Heart right ventricle (tissue), 16 donors: ENCODE measurements at regions of chr13 and their contacts with region 1.

Region 1: GRCh38 chr13:95684418-95684817 is 7.5 kb downstream of the DNAJC3 start:
- DNase-seq: no peak
- ATAC-seq: peak in 1 of 8 donors; percentile 41
- H3K4me3 ChIP-seq: no peak overlapping the region
- H3K27ac ChIP-seq: no peak overlapping the region
- H3K4me1 ChIP-seq: peaks cover 0 to 77% (median 34%) of the 10 kb centered on the region in 9 donors
- H3K27me3 ChIP-seq: no peaks in the 10 kb centered on the region
- CTCF ChIP-seq: no peak

Region 2: DNA sequence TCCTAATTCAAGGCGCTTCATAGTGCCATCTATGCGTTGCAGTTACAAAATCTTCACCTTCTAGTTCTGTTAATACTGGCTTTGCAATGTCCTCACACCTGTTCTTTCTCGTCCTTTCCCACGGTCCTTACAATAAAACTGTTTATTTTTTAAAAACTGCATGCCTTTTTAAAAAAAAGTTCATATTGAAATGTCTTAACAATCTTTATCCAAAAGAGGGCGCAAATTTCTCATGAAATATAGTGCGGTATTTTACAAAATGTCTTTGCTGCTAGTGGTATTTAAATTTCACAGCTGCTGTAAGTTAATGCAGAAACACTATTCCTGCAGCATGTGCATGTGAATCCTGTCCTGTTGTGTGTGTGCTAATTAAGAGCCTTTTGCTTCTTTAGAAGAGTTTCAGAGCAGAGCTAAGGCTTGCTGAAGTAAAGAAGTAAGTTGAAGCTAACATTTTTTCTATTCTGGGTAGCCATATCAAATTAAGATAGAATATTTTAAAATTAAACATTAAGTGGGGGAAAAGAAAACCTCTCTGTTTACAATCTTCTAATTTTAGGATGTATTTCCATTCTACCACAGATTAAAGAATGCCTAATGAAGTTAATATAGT is 147.7 kb before region 1 on chr13:
- intact Hi-C with region 1: no loop called
- DNase-seq: no peak
- ATAC-seq: no peak
- H3K4me3 ChIP-seq: no peak overlapping the region
- H3K27ac ChIP-seq: no peak overlapping the region
- H3K4me1 ChIP-seq: peaks cover 0 to 18% (median 11%) of the 10 kb centered on the region in 9 donors
- H3K27me3 ChIP-seq: peaks cover 0 to 3% (median 0%) of the 10 kb centered on the region in 7 donors
- CTCF ChIP-seq: peak in 8 of 9 donors; percentile 17 to 62 (median 50)

Region 3: DNA sequence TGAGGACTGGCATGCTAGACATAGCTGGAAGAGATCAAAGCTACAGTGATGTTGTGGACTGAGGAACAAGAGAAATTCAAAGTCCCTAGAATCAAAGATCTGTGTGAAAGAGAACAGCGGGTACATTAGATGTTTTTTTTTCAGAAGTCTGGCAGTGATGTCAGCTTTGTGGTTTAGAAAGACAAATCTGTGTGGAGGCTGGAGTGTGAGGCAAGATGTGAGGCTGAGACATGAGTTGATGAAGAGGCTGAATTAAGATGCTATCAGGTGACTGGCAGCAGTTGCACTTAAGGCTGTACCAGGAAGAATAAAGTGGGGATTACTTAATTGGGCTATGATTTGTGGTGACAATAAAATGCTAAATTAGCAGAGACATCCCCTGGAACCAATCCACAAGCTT is 39.0 kb after region 1 on chr13:
- intact Hi-C with region 1: loop called in 1 of 10 experiments (anchors 2 kb)
- DNase-seq: no peak
- ATAC-seq: no peak
- H3K4me3 ChIP-seq: no peak overlapping the region
- H3K27ac ChIP-seq: no peak overlapping the region
- H3K4me1 ChIP-seq: peaks cover 0 to 4% (median 0%) of the 10 kb centered on the region in 9 donors
- H3K27me3 ChIP-seq: no peaks in the 10 kb centered on the region
- CTCF ChIP-seq: no peak

Region 4: DNA sequence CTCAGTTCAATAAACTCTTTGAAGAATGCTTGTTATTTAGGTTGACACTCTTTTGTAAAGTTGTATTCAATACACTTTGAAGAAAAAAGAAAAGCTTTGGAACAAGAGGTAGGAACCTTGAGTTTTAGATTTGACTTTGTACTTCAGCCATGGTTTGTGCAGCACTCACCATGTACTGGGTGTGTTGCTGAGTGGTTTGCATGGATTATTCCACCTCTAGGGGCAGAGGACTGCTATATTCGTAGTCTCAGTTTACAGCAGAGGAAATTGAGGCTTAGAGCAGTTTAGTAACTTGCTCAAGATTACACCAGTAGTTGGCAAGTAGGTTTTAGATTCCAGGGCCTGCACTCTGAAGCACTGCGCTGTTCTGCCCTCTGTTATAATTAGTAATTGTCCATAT is 61.3 kb after region 1 on chr13:
- intact Hi-C with region 1: loop called in 1 of 10 experiments (anchors 10 kb)
- DNase-seq: no peak
- ATAC-seq: peak in 4 of 8 donors; percentile 28 to 49 (median 34)
- H3K4me3 ChIP-seq: no peak overlapping the region
- H3K27ac ChIP-seq: no peak overlapping the region
- H3K4me1 ChIP-seq: peaks cover 0 to 16% (median 4%) of the 10 kb centered on the region in 9 donors
- H3K27me3 ChIP-seq: no peaks in the 10 kb centered on the region
- CTCF ChIP-seq: no peak

Region 5: GRCh38 chr13:95771905-95772304 is 87.5 kb after region 1 on chr13:
- intact Hi-C with region 1: loop called in 1 of 10 experiments (anchors 10 kb)
- DNase-seq: no peak
- ATAC-seq: no peak
- H3K4me3 ChIP-seq: no peak overlapping the region
- H3K27ac ChIP-seq: no peak overlapping the region
- H3K4me1 ChIP-seq: no peaks in the 10 kb centered on the region
- H3K27me3 ChIP-seq: no peaks in the 10 kb centered on the region
- CTCF ChIP-seq: no peak

Region 6: DNA sequence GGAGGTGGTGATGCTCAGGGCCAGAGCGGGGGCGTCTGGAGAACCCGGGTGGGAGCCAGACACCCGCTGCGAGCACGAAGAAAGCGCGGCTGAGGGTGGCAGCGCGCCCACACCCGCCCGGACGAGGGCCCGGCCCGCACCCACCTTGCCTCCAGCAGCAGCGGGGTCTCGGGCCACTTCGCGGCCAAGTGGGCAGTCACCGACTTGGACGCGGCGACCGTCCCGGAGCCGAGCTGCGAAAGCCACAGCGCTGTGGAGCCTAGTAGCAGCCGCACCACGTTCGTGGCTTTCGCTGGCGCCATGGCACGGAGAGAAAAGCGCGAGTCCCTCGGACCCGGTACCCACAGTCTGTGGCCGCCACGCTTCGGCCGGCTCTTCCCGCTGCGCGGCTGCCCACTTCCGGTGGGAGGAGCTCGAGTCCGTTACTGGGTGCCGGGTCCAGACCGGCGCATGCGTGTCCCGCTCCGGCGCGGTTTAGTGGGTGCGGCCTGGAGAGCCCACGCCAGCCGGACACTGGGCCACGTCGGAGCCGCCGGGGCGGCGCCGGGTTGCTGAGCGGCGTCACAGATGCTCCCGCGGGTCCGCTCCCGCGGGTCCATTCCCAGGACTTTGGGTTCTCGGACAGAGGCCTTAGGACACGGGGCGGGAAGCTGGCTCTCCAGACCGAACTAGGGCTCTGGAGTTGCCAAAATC is 368.7 kb after region 1 on chr13 and contains the start of gene UGGT2:
- intact Hi-C with region 1: loop called in 1 of 10 experiments (anchors 5 kb)
- DNase-seq: peak; percentile 94 to 97
- ATAC-seq: peak; percentile 100
- H3K4me3 ChIP-seq: peak within 1 kb of the TSS; percentile 57 to 94 (median 82)
- H3K27ac ChIP-seq: peak within 1 kb of the TSS; percentile 61 to 89 (median 82)
- H3K4me1 ChIP-seq: peaks cover 0 to 11% (median 8%) of the 10 kb centered on the region in 9 donors
- H3K27me3 ChIP-seq: peaks cover 0 to under 1% (median 0%) of the 10 kb centered on the region in 7 donors
- CTCF ChIP-seq: peak in 5 of 9 donors; percentile 9 to 37 (median 25)
- total RNA-seq, gene UGGT2: 9.8 to 13.4 (median 11.5) TPM